GM12878 (cell line): ENCODE measurements at regions of chr18 and their contacts with region 1.

Region 1: DNA sequence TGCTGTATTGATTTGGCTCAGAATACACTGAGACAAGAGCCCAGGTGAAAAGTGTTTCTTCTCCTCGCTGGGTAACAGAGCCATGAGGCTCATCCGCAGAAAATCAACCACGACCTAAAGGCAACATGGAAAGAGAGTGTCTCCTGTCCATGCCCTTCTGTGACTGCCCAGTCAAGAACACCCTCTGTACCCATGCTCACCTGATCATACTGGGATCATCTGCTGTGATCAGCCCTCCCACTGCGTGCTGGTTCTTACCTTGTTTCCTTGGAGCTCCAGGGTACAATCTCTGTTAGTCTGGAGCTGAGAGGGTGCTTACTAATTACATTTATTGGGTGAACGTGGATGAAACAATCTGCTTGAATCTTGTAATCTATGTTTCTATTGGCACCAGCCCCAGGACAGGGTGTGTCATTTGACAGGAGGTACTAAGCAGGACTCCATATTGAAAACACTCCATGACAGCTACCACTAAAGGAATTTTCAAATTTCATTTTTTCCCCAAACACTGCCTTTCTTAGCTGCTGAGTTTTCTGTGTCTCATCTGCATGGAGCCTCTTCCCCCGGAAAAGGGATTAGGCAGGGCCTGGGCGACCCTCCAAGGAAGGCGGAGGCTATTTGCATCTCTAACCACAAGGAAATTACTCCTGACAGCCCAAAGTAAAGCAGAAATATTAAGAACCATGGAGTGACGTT is 39.7 kb upstream of the GRP start:
- DNase-seq: no peak
- ATAC-seq: no peak
- H3K4me3 ChIP-seq: no peak overlapping the region
- H3K27ac ChIP-seq: no peak overlapping the region
- H3K4me1 ChIP-seq: no peaks in the 10 kb centered on the region
- H3K27me3 ChIP-seq: no peaks in the 10 kb centered on the region
- CTCF ChIP-seq: no peak
- EP300 ChIP-seq: no peak
- POLR2A ChIP-seq: no peak
- RAD21 ChIP-seq: no peak

Region 2: DNA sequence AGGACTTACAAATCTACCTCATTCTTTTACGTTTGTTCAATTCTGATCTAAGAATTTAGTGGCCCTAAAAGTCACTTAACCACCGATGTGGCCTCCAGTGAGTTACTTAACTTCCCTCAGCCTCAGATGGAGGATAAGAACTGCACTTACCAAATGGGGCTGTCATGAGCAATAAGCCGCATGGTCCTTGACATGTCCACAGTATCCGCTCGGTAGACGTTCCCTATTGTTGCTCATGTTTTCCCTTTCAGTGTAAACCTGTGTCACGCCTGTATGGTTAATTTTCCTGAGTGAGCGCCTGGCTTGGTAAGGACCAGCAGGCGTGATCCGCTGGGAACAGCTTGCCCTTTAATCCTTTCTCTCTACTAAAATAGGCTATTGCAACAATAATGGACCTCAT is 20.3 kb before region 1 on chr18:
- CTCF ChIA-PET with region 1: no interaction called
- POLR2A ChIA-PET with region 1: interaction called, 3 read pairs
- RAD21 ChIA-PET with region 1: no interaction called
- SMC1A ChIA-PET with region 1: no interaction called
- in situ Hi-C with region 1: no loop called
- intact Hi-C with region 1: loop called (anchors 2 kb)
- DNase-seq: no peak
- ATAC-seq: no peak
- H3K4me3 ChIP-seq: no peak overlapping the region
- H3K27ac ChIP-seq: no peak overlapping the region
- H3K4me1 ChIP-seq: no peaks in the 10 kb centered on the region
- H3K27me3 ChIP-seq: no peaks in the 10 kb centered on the region
- CTCF ChIP-seq: no peak
- EP300 ChIP-seq: no peak
- POLR2A ChIP-seq: no peak
- RAD21 ChIP-seq: no peak

Region 3: GRCh38 chr18:59419386-59419785 is 239.1 kb after region 1 on chr18:
- CTCF ChIA-PET with region 1: no interaction called
- POLR2A ChIA-PET with region 1: no interaction called
- RAD21 ChIA-PET with region 1: no interaction called
- SMC1A ChIA-PET with region 1: no interaction called
- in situ Hi-C with region 1: no loop called
- intact Hi-C with region 1: no loop called
- DNase-seq: no peak
- ATAC-seq: no peak
- H3K4me3 ChIP-seq: no peak overlapping the region
- H3K27ac ChIP-seq: no peak overlapping the region
- H3K4me1 ChIP-seq: no peaks in the 10 kb centered on the region
- H3K27me3 ChIP-seq: peaks cover 0 to 2% of the 10 kb centered on the region in 2 experiments; a peak in 2 of 4 replicates
- CTCF ChIP-seq: no peak
- EP300 ChIP-seq: no peak
- POLR2A ChIP-seq: no peak
- RAD21 ChIP-seq: no peak

Region 4: DNA sequence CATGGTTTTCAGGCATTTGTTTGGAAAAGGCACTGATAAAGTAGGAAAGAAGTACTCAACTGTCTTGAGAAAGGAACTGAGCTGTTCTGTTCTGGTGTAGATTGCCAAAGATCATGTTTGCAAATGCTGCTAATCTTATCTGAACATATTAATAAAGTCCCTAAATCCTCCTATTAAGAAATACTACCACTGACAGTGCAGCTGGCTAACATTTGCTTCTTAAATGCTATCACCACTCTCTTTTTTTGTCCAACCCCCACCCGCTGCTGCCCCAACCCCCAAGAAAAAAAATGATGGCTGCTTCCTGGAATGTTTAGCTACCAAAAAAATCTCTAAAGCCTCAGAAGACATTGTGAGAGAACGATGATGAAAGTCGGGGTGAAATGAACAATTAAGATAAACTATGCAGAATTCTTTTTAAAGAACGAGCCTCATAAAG is 386.3 kb after region 1 on chr18:
- CTCF ChIA-PET with region 1: no interaction called
- POLR2A ChIA-PET with region 1: no interaction called
- RAD21 ChIA-PET with region 1: no interaction called
- SMC1A ChIA-PET with region 1: no interaction called
- in situ Hi-C with region 1: no loop called
- intact Hi-C with region 1: no loop called
- DNase-seq: no peak
- ATAC-seq: no peak
- H3K4me3 ChIP-seq: no peak overlapping the region
- H3K27ac ChIP-seq: no peak overlapping the region
- H3K4me1 ChIP-seq: no peaks in the 10 kb centered on the region
- H3K27me3 ChIP-seq: no peaks in the 10 kb centered on the region; a peak in 1 of 4 replicates
- CTCF ChIP-seq: no peak
- EP300 ChIP-seq: no peak
- POLR2A ChIP-seq: no peak
- RAD21 ChIP-seq: no peak